ENCODE measurements at regions of chr1 and their contacts with region 1.

Region 1: GRCh38 chr1:85276215-85276977 is at the start of gene BCL10:
- DNase-seq: peak; percentile 95 to 99 (median 98)
- ATAC-seq: peak; percentile 94
- H3K4me3 ChIP-seq: peak within 1 kb of the TSS; percentile 72 to 80
- H3K4me3 Mint-ChIP-seq: peak within 1 kb of the TSS; percentile 86
- H3K27ac ChIP-seq: peak within 1 kb of the TSS; percentile 92 to 95
- H3K27ac Mint-ChIP-seq: peak within 1 kb of the TSS; percentile 94
- H3K4me1 ChIP-seq: peaks cover 35% of the 10 kb centered on the region
- H3K4me1 Mint-ChIP-seq: peaks cover 48% of the 10 kb centered on the region
- H3K27me3 ChIP-seq: no peaks in the 10 kb centered on the region
- H3K27me3 Mint-ChIP-seq: no peaks in the 10 kb centered on the region
- CTCF ChIP-seq: no peak
- total RNA-seq, gene BCL10: 48.2 to 51.7 TPM

Region 2: DNA sequence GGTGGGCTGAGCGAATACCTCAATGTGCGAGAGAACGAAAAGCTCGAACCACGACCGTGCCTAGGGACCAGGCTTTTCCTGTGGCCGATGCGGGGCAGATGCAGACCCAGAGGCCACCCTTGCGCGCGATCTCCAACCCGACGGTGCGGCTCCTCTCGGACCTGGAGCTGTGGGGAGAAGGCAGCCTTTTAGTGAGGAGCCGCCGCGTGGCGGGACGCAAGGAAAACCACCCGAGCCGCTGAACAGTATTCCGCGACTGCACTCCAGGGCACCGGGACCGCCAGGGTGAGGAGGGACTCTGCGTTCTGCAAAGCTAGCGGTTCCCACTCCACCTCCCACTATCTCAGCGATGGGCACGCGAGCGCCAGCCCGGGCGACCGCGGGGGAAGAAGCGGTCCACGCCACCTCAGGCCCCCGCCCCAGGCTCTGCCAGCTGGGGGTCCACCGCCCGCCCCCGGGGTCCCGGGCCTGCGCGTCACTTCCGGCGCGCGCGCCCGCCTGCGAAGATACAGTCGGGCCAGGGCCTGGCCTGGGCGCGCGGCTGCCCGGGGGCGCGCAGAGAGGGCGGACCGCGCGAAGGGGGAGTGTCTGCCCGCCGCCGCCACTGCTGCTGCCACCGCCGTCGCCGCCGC is 1198.8 kb before region 1 on chr1:
- CTCF ChIA-PET with region 1: no interaction called
- POLR2A ChIA-PET with region 1: no interaction called
- intact Hi-C with region 1: loop called (anchors 1 to 10 kb)
- DNase-seq: peak; percentile 48 to 88 (median 74)
- ATAC-seq: peak; percentile 89
- H3K4me3 ChIP-seq: peak overlapping the region; percentile 90 to 91
- H3K4me3 Mint-ChIP-seq: peak overlapping the region; percentile 87
- H3K27ac ChIP-seq: peak overlapping the region; percentile 72 to 76
- H3K27ac Mint-ChIP-seq: peak overlapping the region; percentile 86
- H3K4me1 ChIP-seq: peaks cover 14% of the 10 kb centered on the region
- H3K4me1 Mint-ChIP-seq: peaks cover 13% of the 10 kb centered on the region
- H3K27me3 ChIP-seq: no peaks in the 10 kb centered on the region
- H3K27me3 Mint-ChIP-seq: no peaks in the 10 kb centered on the region
- CTCF ChIP-seq: no peak

Region 3: GRCh38 chr1:84433258-84434080 is 842.9 kb before region 1 on chr1:
- CTCF ChIA-PET with region 1: no interaction called
- POLR2A ChIA-PET with region 1: no interaction called
- intact Hi-C with region 1: loop called in 1 of 2 experiments (anchors 10 kb)
- DNase-seq: peak; percentile 31 to 92 (median 53)
- ATAC-seq: peak; percentile 73
- H3K4me3 ChIP-seq: peak overlapping the region; percentile 34 to 46
- H3K4me3 Mint-ChIP-seq: peak overlapping the region; percentile 76
- H3K27ac ChIP-seq: peak overlapping the region; percentile 73 to 76
- H3K27ac Mint-ChIP-seq: peak overlapping the region; percentile 75
- H3K4me1 ChIP-seq: peaks cover 49% of the 10 kb centered on the region
- H3K4me1 Mint-ChIP-seq: peaks cover 9% of the 10 kb centered on the region
- H3K27me3 ChIP-seq: no peaks in the 10 kb centered on the region
- H3K27me3 Mint-ChIP-seq: no peaks in the 10 kb centered on the region
- CTCF ChIP-seq: peak; percentile 65

Region 4: GRCh38 chr1:84853741-84854721 is 422.4 kb before region 1 on chr1:
- CTCF ChIA-PET with region 1: no interaction called
- POLR2A ChIA-PET with region 1: no interaction called
- intact Hi-C with region 1: loop called in 1 of 2 experiments (anchors 1 kb)
- DNase-seq: peak in 7 of 9 experiments; percentile 22 to 80 (median 50)
- ATAC-seq: peak; percentile 98
- H3K4me3 ChIP-seq: no peak overlapping the region
- H3K4me3 Mint-ChIP-seq: no peak overlapping the region
- H3K27ac ChIP-seq: peak overlapping the region in 1 of 2 experiments; percentile 47
- H3K27ac Mint-ChIP-seq: peak overlapping the region; percentile 62
- H3K4me1 ChIP-seq: peaks cover 24% of the 10 kb centered on the region
- H3K4me1 Mint-ChIP-seq: peaks cover 42% of the 10 kb centered on the region
- H3K27me3 ChIP-seq: no peaks in the 10 kb centered on the region
- H3K27me3 Mint-ChIP-seq: no peaks in the 10 kb centered on the region
- CTCF ChIP-seq: no peak

Region 5: GRCh38 chr1:85200870-85201339 is 75.5 kb before region 1 on chr1 and contains the start of gene SYDE2:
- CTCF ChIA-PET with region 1: no interaction called
- POLR2A ChIA-PET with region 1: interaction called, 11 read pairs
- intact Hi-C with region 1: loop called (anchors 1 to 5 kb)
- DNase-seq: peak; percentile 70 to 91 (median 79)
- ATAC-seq: peak; percentile 83
- H3K4me3 ChIP-seq: peak within 1 kb of the TSS; percentile 68 to 94
- H3K4me3 Mint-ChIP-seq: peak within 1 kb of the TSS; percentile 100
- H3K27ac ChIP-seq: peak within 1 kb of the TSS; percentile 63 to 94
- H3K27ac Mint-ChIP-seq: peak within 1 kb of the TSS; percentile 100
- H3K4me1 ChIP-seq: peaks cover 27% of the 10 kb centered on the region
- H3K4me1 Mint-ChIP-seq: peaks cover 48% of the 10 kb centered on the region
- H3K27me3 ChIP-seq: peaks cover 0 to 5% of the 10 kb centered on the region in 2 experiments
- H3K27me3 Mint-ChIP-seq: peaks cover 4% of the 10 kb centered on the region
- CTCF ChIP-seq: no peak
- total RNA-seq, gene SYDE2: 6.2 to 6.4 TPM

Region 6: GRCh38 chr1:85240174-85240601 is 36.2 kb before region 1 on chr1:
- CTCF ChIA-PET with region 1: no interaction called
- POLR2A ChIA-PET with region 1: no interaction called
- intact Hi-C with region 1: no loop called
- DNase-seq: peak in 2 of 9 experiments; percentile 35 to 47
- ATAC-seq: peak; percentile 61
- H3K4me3 ChIP-seq: no peak overlapping the region
- H3K4me3 Mint-ChIP-seq: no peak overlapping the region
- H3K27ac ChIP-seq: no peak overlapping the region
- H3K27ac Mint-ChIP-seq: no peak overlapping the region
- H3K4me1 ChIP-seq: no peaks in the 10 kb centered on the region
- H3K4me1 Mint-ChIP-seq: peaks cover 13% of the 10 kb centered on the region
- H3K27me3 ChIP-seq: peaks cover 0 to 3% of the 10 kb centered on the region in 2 experiments
- H3K27me3 Mint-ChIP-seq: peaks cover 14% of the 10 kb centered on the region
- CTCF ChIP-seq: no peak

Region 7: DNA sequence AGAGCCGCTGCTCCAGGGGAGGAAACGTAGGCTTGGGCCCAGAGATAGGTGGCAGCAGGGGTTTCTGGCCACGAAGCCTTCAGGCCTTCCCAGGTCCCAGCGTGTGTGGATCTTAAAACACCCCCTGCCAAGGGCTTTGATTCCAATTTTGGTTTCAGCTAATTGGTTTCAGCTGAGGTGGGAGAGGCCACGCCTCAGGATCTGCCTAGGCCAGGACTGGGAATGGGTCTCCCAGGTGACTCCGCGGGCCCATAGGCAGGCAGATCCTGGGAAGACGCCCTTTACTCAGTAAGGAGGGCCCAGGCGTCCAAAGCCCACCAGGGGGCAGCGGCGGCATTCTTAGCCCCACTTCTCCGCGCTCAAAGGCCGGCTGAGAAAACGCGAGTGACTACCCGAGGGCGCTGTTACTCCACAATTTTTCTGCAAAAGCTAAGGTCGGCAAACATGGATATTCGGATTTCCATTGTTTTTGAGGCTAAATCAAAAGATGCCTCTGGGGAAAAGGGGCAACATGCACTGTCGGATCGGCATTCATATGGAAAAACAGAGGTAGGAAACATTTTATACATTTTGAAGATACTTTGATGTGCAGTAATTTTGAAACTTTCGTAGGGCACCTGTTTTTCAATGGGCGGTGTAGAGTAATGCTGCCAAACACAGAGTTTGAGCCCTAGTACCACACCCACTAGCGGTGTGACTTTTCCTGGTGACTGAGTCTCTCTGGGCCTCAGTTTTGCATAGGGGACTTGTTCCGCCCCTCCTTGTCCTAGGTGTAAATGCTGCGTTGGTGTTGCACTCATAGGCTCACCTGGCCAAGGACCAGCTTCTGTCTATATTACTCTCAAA is 31.8 kb after region 1 on chr1:
- CTCF ChIA-PET with region 1: interaction called, 5 read pairs
- POLR2A ChIA-PET with region 1: no interaction called
- intact Hi-C with region 1: loop called in 1 of 2 experiments (anchors 1 kb)
- DNase-seq: peak; percentile 19 to 74 (median 65)
- ATAC-seq: peak; percentile 90
- H3K4me3 ChIP-seq: no peak overlapping the region
- H3K4me3 Mint-ChIP-seq: peak overlapping the region; percentile 65
- H3K27ac ChIP-seq: no peak overlapping the region
- H3K27ac Mint-ChIP-seq: no peak overlapping the region
- H3K4me1 ChIP-seq: peaks cover 4% of the 10 kb centered on the region
- H3K4me1 Mint-ChIP-seq: peaks cover 5% of the 10 kb centered on the region
- H3K27me3 ChIP-seq: no peaks in the 10 kb centered on the region
- H3K27me3 Mint-ChIP-seq: peaks cover 35% of the 10 kb centered on the region
- CTCF ChIP-seq: peak; percentile 68

Region 8: GRCh38 chr1:86704458-86704971 is 1428.1 kb after region 1 on chr1 and contains the start of gene SH3GLB1:
- CTCF ChIA-PET with region 1: no interaction called
- POLR2A ChIA-PET with region 1: no interaction called
- intact Hi-C with region 1: loop called in 1 of 2 experiments (anchors 10 kb)
- DNase-seq: peak; percentile 80 to 94 (median 90)
- ATAC-seq: peak; percentile 87
- H3K4me3 ChIP-seq: peak within 1 kb of the TSS; percentile 82 to 83
- H3K4me3 Mint-ChIP-seq: peak within 1 kb of the TSS; percentile 97
- H3K27ac ChIP-seq: peak within 1 kb of the TSS; percentile 81 to 92
- H3K27ac Mint-ChIP-seq: peak within 1 kb of the TSS; percentile 99
- H3K4me1 ChIP-seq: peaks cover 38% of the 10 kb centered on the region
- H3K4me1 Mint-ChIP-seq: peaks cover 57% of the 10 kb centered on the region
- H3K27me3 ChIP-seq: no peaks in the 10 kb centered on the region
- H3K27me3 Mint-ChIP-seq: no peaks in the 10 kb centered on the region
- CTCF ChIP-seq: peak; percentile 98
- total RNA-seq, gene SH3GLB1: 47.5 to 56.5 TPM

Measured in CD8-positive, alpha-beta T cell (primary cell).